ENCODE measurements at regions of chr1 and their contacts with region 1.

Region 1: GRCh38 chr1:203117611-203118575 is 9.6 kb upstream of the ADORA1 start:
- DNase-seq: peak; percentile 69 to 88 (median 78)
- H3K4me3 ChIP-seq: peak overlapping the region in 33 of 59 donors; percentile 3 to 47 (median 28)
- H3K27ac ChIP-seq: no peak overlapping the region
- H3K27me3 ChIP-seq: no peaks in the 10 kb centered on the region
- CTCF ChIP-seq: peak; percentile 50 to 99 (median 86)

Region 2: GRCh38 chr1:203172128-203173010 is 54.5 kb after region 1 on chr1:
- intact Hi-C with region 1: loop called (anchors 2 kb)
- DNase-seq: peak; percentile 56 to 79 (median 72)
- H3K4me3 ChIP-seq: no peak overlapping the region
- H3K27ac ChIP-seq: peak overlapping the region in 53 of 59 donors; percentile 7 to 71 (median 51)
- H3K27me3 ChIP-seq: no peaks in the 10 kb centered on the region
- CTCF ChIP-seq: peak; percentile 64 to 93 (median 87)

Region 3: GRCh38 chr1:203216274-203217138 is 98.6 kb after region 1 on chr1:
- intact Hi-C with region 1: loop called (anchors 1 to 5 kb)
- DNase-seq: peak in 7 of 10 donors; percentile 34 to 84 (median 62)
- H3K4me3 ChIP-seq: no peak overlapping the region
- H3K27ac ChIP-seq: peak overlapping the region in 6 of 59 donors; percentile 1 to 36 (median 15)
- H3K27me3 ChIP-seq: no peaks in the 10 kb centered on the region
- CTCF ChIP-seq: peak in 55 of 56 donors; percentile 71 to 96 (median 86)

Region 4: GRCh38 chr1:203267347-203267846 is 149.5 kb after region 1 on chr1:
- intact Hi-C with region 1: loop called in 1 of 2 experiments (anchors 5 kb)
- DNase-seq: peak in 9 of 10 donors; percentile 60 to 83 (median 82)
- H3K4me3 ChIP-seq: peak overlapping the region; percentile 35 to 82 (median 60)
- H3K27ac ChIP-seq: peak overlapping the region in 57 of 59 donors; percentile 13 to 93 (median 77)
- H3K27me3 ChIP-seq: no peaks in the 10 kb centered on the region
- CTCF ChIP-seq: peak; percentile 86 to 99 (median 95)